B cell (primary cell): ENCODE measurements at regions of chr1 and their contacts with region 1.

Region 1: DNA sequence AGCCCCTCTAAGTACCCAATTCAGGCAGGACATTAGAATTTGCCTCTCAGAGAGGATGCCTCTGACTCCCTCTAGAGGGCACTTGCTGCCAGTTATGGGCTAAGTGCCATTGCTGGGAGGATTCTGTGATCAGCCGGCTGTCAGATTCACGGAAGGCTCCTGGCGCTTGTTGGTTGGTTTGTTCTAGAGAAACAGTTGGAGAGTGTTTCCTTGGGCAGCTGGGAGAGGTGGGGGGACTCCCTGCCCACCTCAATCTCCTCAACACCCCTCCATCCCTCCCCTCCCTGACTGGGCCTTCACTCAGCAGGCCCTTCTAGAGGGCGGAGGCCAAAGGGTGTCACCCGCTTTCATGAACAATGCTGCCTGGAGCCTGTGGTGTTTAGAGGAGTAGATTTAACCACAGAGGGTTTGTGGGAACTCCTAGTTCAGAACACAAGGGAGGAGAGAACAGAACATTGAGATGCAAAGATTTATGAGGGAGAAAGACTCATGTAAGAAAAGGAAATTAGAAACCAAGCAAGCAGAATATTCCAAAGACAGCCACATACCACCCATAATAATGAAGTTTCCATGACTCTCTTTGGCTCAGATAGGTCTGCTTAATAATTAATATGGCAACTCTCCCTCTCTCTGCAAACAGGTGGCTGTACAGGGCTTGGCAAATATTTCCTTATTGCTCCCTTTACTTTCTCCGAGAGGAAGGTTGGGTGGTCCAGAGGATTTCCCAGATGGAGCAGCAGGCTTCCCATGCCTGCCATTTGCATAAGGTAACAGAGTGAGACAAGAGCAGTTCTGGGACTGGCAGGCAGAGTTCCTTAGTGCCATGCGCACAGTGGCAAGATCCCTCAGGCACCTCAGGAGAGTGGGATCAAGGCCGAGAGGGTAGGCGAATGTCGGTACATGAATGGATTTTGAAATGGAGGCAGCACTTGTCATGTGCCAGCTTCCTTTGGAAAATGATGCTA is 30.0 kb upstream of the ACP6 start:
- DNase-seq: peak; percentile 60
- ATAC-seq: peak; percentile 56
- H3K4me3 ChIP-seq: no peak overlapping the region
- H3K4me3 Mint-ChIP-seq: no peak overlapping the region
- H3K27ac ChIP-seq: no peak overlapping the region
- H3K27ac Mint-ChIP-seq: no peak overlapping the region
- H3K4me1 ChIP-seq: peaks cover 0 to 3% of the 10 kb centered on the region in 2 donors
- H3K4me1 Mint-ChIP-seq: no peaks in the 10 kb centered on the region
- H3K27me3 ChIP-seq: peaks cover 0 to 5% (median 3%) of the 10 kb centered on the region in 4 experiments
- H3K27me3 Mint-ChIP-seq: peaks cover 39% of the 10 kb centered on the region
- CTCF ChIP-seq: peak; percentile 77

Region 2: GRCh38 chr1:147494998-147495580 is 205.2 kb before region 1 on chr1:
- CTCF ChIA-PET with region 1: no interaction called
- POLR2A ChIA-PET with region 1: no interaction called
- intact Hi-C with region 1: loop called (anchors 1 kb)
- DNase-seq: peak; percentile 75
- ATAC-seq: peak; percentile 82
- H3K4me3 ChIP-seq: no peak overlapping the region
- H3K4me3 Mint-ChIP-seq: no peak overlapping the region
- H3K27ac ChIP-seq: no peak overlapping the region
- H3K27ac Mint-ChIP-seq: no peak overlapping the region
- H3K4me1 ChIP-seq: peaks cover 0 to 3% of the 10 kb centered on the region in 2 donors
- H3K4me1 Mint-ChIP-seq: no peaks in the 10 kb centered on the region
- H3K27me3 ChIP-seq: peaks cover 0 to 6% (median 3%) of the 10 kb centered on the region in 4 experiments
- H3K27me3 Mint-ChIP-seq: peaks cover 24% of the 10 kb centered on the region
- CTCF ChIP-seq: peak; percentile 92

Region 3: GRCh38 chr1:147683163-147683763 is 17.1 kb before region 1 on chr1:
- CTCF ChIA-PET with region 1: no interaction called
- POLR2A ChIA-PET with region 1: no interaction called
- intact Hi-C with region 1: no loop called
- DNase-seq: no peak
- ATAC-seq: no peak
- H3K4me3 ChIP-seq: no peak overlapping the region
- H3K4me3 Mint-ChIP-seq: no peak overlapping the region
- H3K27ac ChIP-seq: no peak overlapping the region
- H3K27ac Mint-ChIP-seq: no peak overlapping the region
- H3K4me1 ChIP-seq: no peaks in the 10 kb centered on the region
- H3K4me1 Mint-ChIP-seq: no peaks in the 10 kb centered on the region
- H3K27me3 ChIP-seq: peaks cover 0 to 13% (median 2%) of the 10 kb centered on the region in 4 experiments
- H3K27me3 Mint-ChIP-seq: peaks cover 18% of the 10 kb centered on the region
- CTCF ChIP-seq: no peak